WTC11 (cell line): ENCODE measurements at regions of chr14 and their contacts with region 1.

Region 1: DNA sequence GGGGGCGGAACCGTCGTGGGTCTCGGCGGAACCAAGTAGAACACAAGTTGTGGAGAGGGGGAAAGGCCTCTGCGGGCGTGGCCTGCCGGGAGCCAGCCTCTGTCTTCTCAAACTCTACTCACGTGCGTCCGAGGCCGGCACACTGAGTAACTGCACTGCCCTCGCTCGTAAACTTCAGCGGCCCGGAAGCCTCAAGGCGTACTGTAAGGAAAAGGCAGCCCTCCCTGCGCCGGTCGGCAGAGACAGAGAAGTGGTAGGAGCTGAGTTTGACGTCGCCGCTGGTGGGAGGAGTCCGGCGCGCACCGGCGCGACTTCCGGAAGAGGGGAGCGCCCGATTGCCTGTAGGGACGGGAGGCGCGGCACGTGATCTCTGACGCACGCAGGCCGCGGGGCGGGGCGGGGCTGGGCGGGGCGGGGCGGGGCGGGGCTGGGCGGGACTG is at the start of gene FBXO33:
- DNase-seq: peak; percentile 96
- ATAC-seq: peak; percentile 85
- H3K4me3 Mint-ChIP-seq: peak within 1 kb of the TSS; percentile 98
- H3K27ac Mint-ChIP-seq: peak within 1 kb of the TSS; percentile 100
- H3K4me1 Mint-ChIP-seq: peaks cover 23% of the 10 kb centered on the region
- H3K27me3 Mint-ChIP-seq: no peaks in the 10 kb centered on the region
- CTCF ChIP-seq: no peak
- total RNA-seq, gene FBXO33: 7.8 to 9.6 TPM (median 8.4 TPM) in 3 replicates

Region 2: DNA sequence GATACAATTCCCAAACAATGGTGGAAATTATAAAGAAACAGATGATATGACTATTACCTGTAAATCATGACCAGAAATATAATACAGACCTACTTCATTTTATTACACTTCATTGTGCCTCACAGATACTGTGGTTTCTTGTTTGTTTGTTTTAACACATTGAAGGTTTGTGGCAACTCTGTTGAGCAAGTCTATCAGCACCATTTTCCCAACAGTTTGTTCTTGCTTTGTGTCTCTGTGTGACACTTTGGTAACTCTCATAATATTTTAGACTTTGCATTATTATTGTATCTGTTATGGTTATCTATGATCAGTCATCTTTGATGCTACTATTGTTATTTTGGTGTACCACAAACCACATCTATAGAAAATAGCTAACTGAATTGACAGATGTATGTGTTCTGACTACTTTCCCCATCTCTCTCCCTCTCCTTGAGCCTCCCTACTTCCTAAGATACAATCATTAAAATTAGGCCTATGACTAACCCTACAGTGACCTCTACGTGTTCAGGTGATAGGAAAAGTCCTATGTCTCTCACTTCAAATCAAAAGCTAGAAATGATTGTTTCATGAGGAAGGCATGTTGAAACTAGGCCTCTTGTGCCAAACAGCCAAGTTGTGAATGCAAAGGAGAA is 49.1 kb before region 1 on chr14:
- CTCF ChIA-PET with region 1: no interaction called
- POLR2A ChIA-PET with region 1: no interaction called
- DNase-seq: no peak
- ATAC-seq: no peak
- H3K4me3 Mint-ChIP-seq: no peak overlapping the region
- H3K27ac Mint-ChIP-seq: no peak overlapping the region
- H3K4me1 Mint-ChIP-seq: peaks cover 6% of the 10 kb centered on the region
- H3K27me3 Mint-ChIP-seq: no peaks in the 10 kb centered on the region
- CTCF ChIP-seq: no peak

Region 3: GRCh38 chr14:39395555-39396254 is 36.5 kb before region 1 on chr14:
- CTCF ChIA-PET with region 1: no interaction called
- POLR2A ChIA-PET with region 1: interaction called, 10 read pairs
- DNase-seq: no peak
- ATAC-seq: no peak
- H3K4me3 Mint-ChIP-seq: no peak overlapping the region
- H3K27ac Mint-ChIP-seq: no peak overlapping the region
- H3K4me1 Mint-ChIP-seq: no peaks in the 10 kb centered on the region
- H3K27me3 Mint-ChIP-seq: no peaks in the 10 kb centered on the region
- CTCF ChIP-seq: no peak

Region 4: GRCh38 chr14:39469094-39469710 is 37.0 kb after region 1 on chr14:
- CTCF ChIA-PET with region 1: interaction called, 10 read pairs
- POLR2A ChIA-PET with region 1: interaction called, 7 read pairs
- DNase-seq: peak; percentile 56
- ATAC-seq: peak; percentile 90
- H3K4me3 Mint-ChIP-seq: no peak overlapping the region
- H3K27ac Mint-ChIP-seq: no peak overlapping the region; the same call in 1 of the 2 replicates
- H3K4me1 Mint-ChIP-seq: peaks cover 6% of the 10 kb centered on the region
- H3K27me3 Mint-ChIP-seq: no peaks in the 10 kb centered on the region
- CTCF ChIP-seq: no peak; the same call in 1 of the 2 replicates